ENCODE measurements at regions of chr7 and their contacts with region 1.

Region 1: GRCh38 chr7:102933763-102934162 is 21.0 kb downstream of the LRRC17 start:
- DNase-seq: peak; percentile 37 to 92
- H3K4me3 ChIP-seq: peak overlapping the region in 1 of 2 donors; percentile 37
- H3K27ac ChIP-seq: peak overlapping the region; percentile 81 to 88
- H3K4me1 ChIP-seq: peaks cover 3 to 31% of the 10 kb centered on the region in 2 donors
- H3K27me3 ChIP-seq: no peaks in the 10 kb centered on the region
- CTCF ChIP-seq: no peak

Region 2: DNA sequence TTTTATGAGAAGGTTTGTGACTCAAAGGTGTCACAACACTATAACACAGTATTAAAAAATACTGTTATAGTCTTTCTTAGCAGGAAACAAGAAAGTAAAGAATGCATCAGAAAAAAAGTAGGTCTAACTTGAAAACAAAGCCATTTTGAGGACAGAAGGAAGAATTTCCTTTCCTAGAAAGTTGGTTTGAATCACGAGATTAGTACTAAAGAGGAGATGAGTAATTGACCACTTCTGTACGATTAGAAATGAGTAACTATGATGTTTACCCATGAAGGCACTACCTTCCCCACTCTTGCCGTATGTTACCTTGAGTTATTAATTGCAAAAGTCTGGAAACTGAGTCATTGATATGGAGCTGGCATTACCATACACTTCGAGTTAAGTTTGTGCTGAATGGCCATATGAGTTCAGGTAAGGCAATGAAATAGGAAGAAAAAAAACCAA is 119.7 kb before region 1 on chr7:
- intact Hi-C with region 1: no loop called
- DNase-seq: no peak
- H3K4me3 ChIP-seq: no peak overlapping the region
- H3K27ac ChIP-seq: no peak overlapping the region
- H3K4me1 ChIP-seq: peaks cover 6 to 19% of the 10 kb centered on the region in 2 donors
- H3K27me3 ChIP-seq: no peaks in the 10 kb centered on the region
- CTCF ChIP-seq: no peak

Region 3: DNA sequence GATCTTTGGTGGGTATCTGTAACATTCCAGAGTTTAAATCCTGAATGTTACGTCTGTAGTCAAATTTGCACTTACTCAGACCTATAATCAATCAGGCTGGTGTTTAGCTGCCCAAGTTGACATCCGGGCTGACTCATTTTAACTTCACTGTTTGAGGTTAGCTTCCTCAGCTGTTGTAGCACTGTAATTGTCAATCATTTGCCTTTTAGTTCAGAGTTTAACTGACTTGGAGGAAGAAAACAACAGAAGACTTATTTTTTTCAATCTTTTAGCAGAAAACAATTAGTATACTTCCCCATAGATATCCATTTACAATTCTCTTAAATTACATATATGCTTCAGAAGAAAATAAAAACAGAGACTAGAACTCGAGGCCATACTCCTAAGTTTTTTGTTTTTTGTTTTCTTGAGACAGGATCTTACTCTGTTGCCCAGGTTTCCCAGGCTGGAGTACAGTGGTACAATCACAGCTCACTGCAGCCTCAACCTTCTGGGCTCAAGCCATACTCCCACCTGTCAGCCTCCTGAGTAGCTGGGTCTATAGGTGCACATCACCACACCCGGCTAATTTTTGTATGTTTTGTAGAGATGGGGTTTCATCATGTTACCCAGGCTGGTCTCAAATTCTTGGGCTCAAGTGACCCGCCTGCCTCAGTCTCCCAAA is 59.5 kb before region 1 on chr7:
- intact Hi-C with region 1: loop called (anchors 5 kb)
- DNase-seq: no peak
- H3K4me3 ChIP-seq: no peak overlapping the region
- H3K27ac ChIP-seq: peak overlapping the region; percentile 59 to 74
- H3K4me1 ChIP-seq: peaks cover 5 to 26% of the 10 kb centered on the region in 2 donors
- H3K27me3 ChIP-seq: no peaks in the 10 kb centered on the region
- CTCF ChIP-seq: no peak